ENCODE measurements at regions of chr4 and their contacts with region 1.

Region 1: DNA sequence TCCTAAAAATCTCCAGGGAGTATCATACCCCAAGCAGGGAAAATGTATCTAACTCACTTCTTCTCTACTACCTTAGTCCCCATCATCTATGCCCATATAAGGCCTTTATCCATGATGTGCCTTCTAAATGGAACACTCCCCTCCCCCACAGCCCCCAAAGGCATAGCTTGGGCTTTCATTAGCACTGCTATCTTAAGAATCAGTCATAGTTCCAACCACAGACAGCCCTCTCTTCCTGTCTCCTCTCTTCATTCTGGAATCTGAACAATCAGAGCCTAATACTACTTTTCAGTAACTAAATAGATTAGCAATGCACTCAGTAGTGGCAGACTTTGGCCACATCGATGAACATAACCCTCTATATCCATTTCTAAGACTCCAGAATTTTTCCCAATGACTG is 313.2 kb upstream of the DKK2 start:
- DNase-seq: no peak
- H3K4me3 ChIP-seq: no peak overlapping the region
- H3K27ac ChIP-seq: no peak overlapping the region
- H3K4me1 ChIP-seq: peaks cover 0 to 8% (median 3%) of the 10 kb centered on the region in 4 donors
- H3K27me3 ChIP-seq: no peaks in the 10 kb centered on the region
- CTCF ChIP-seq: no peak
- EP300 ChIP-seq: no peak
- POLR2A ChIP-seq: no peak

Region 2: DNA sequence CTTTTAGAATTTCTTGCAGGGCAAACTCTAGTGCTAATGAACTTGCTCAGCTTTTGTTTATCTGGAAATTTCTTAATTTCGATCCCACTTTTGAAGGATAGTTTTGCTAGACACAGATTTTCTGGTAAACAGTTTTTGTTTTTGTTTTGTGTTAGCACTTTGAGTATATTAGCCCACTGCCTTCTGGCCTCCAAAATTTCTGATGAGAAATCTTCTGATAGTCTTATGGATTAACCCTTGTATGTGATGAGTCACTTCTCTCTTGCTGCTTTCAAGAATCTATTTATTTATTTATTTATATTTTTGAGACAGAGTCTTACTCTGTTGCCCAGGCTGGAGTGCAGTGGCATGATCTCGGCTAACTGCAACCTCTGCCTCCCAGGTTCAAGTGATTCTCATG is 953.7 kb before region 1 on chr4:
- intact Hi-C with region 1: no loop called
- DNase-seq: no peak
- H3K4me3 ChIP-seq: no peak overlapping the region
- H3K27ac ChIP-seq: no peak overlapping the region
- H3K4me1 ChIP-seq: no peaks in the 10 kb centered on the region
- H3K27me3 ChIP-seq: no peaks in the 10 kb centered on the region
- CTCF ChIP-seq: no peak
- EP300 ChIP-seq: no peak
- POLR2A ChIP-seq: no peak

Region 3: DNA sequence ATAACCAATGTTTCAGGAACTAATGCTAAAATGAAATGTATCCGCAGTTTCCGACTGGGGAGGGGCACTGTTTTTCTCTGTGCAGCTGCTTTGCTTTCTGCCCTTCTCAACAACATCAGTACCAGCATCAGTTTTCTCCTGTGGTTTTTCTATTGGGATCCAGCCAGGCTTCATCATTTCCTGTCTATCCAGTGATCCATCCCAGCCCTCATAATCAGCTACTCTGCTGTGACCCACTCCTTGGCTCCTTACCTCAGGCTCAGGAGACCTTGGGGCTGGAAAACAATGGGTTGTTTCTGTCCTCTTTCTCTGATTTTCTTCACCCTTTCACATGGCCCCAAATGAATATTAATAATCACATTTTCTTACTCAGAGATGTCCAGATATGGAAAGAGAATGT is 90.9 kb before region 1 on chr4:
- intact Hi-C with region 1: loop called (anchors 10 kb)
- DNase-seq: no peak
- H3K4me3 ChIP-seq: no peak overlapping the region
- H3K27ac ChIP-seq: no peak overlapping the region
- H3K4me1 ChIP-seq: peaks cover 0 to 7% (median under 1%) of the 10 kb centered on the region in 4 donors
- H3K27me3 ChIP-seq: no peaks in the 10 kb centered on the region
- CTCF ChIP-seq: no peak
- EP300 ChIP-seq: no peak
- POLR2A ChIP-seq: no peak

Measured in sigmoid colon (tissue), 7 donors.